Heart left ventricle (tissue), 16 donors: ENCODE measurements at regions of chr6 and their contacts with region 1.

Region 1: GRCh38 chr6:163218361-163218894 is 196.1 kb upstream of the QKI start:
- DNase-seq: no peak
- ATAC-seq: peak in 3 of 4 donors; percentile 9 to 67 (median 22)
- H3K4me3 ChIP-seq: no peak overlapping the region
- H3K27ac ChIP-seq: no peak overlapping the region
- H3K4me1 ChIP-seq: peaks cover 0 to 47% (median 5%) of the 10 kb centered on the region in 12 donors
- H3K27me3 ChIP-seq: no peaks in the 10 kb centered on the region
- CTCF ChIP-seq: no peak
- POLR2A ChIP-seq: no peak

Region 2: DNA sequence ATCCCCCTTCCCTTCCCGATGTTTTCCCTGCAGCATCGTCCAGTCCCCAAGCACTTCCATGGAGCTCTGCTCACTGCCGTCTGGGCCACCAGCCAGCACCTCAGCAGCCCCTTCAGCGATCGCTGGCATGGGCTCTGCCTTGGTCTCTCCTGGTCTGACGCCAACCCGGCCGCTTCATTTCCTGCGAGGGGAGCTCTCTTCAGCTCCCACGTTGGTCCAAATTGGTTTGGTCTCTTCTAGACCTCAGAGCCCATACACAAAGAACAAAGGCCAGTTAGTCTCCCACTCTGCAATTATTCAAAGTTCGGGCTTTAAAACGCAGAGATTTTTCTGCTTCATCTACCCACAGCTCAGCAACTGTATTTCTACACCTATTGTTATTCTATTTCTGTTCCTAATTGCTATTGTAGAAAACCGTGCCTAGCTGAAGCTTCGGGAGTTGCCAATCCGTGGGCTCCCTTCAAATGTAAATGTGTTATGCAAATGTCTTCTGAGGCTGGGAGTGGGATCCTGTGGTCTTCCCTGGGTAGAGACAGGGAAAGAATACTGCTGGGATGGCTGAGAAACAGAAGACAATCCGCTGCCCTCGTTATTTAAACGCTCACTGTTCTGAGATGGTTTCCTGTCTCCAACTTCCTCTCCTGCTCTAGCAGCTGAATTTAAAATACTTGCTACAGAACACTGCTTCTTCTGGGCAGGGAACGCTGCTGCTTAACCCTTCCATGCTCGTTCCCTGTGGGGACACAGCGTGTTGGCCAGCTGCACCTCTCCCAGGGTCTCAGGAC is 41.9 kb after region 1 on chr6:
- intact Hi-C with region 1: loop called in 1 of 10 experiments (anchors 10 kb)
- DNase-seq: peak in 3 of 5 donors; percentile 47 to 73 (median 66)
- ATAC-seq: peak in 3 of 4 donors; percentile 33 to 54 (median 34)
- H3K4me3 ChIP-seq: peak overlapping the region in 9 of 12 donors; percentile 2 to 47 (median 39)
- H3K27ac ChIP-seq: peak overlapping the region; percentile 37 to 74 (median 63)
- H3K4me1 ChIP-seq: peaks cover 0 to 54% (median 18%) of the 10 kb centered on the region in 12 donors
- H3K27me3 ChIP-seq: no peaks in the 10 kb centered on the region
- CTCF ChIP-seq: no peak
- POLR2A ChIP-seq: no peak